GM10248 (cell line): ENCODE measurements at regions of chr5 and their contacts with region 1.

Region 1: GRCh38 chr5:115607935-115608334 is 5.7 kb upstream of the TICAM2 start:
- DNase-seq: no peak
- CTCF ChIP-seq: no peak

Region 2: DNA sequence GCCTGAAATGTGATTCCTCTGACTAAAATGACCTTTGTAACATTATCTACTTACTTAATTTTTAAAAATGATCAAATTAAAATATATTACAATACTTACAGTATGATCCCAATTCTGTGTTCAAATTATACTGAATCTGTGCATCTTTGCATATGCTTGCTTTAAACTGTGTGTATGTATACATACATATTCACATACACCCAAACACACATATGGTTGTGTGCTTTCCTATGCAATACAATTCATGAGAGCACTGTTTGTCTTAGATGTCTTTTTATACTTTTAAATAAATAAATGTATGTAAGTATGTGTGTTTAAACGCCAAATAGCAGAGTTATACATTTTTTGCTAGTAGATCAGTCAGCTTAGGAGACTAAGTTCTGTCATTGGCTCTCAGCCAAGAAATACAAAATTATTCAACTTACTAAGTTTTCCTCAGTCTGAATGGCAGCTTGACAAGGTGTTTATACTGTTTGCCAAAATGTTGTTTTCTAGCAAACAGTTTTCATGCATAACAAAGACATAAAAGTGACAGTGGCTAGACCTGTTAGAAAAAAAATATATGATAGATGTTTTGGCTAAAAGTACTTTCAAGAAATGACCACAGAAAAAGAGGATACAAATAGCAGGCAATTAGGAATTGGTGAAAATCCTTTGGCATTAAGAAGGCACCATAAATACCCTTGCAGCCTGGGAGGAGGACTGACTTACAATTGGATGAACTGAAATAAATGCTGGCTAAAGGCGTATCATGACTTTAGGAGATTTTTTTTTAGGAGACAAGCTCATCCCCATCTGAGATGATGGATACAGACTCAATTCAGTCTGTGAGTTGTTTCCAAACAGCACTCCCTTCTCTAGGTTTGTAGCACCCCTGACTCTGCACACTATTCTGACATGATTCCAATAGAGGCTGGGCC is 13.5 kb before region 1 on chr5:
- CTCF ChIA-PET with region 1: no interaction called
- POLR2A ChIA-PET with region 1: no interaction called
- DNase-seq: no peak
- CTCF ChIP-seq: no peak

Region 3: DNA sequence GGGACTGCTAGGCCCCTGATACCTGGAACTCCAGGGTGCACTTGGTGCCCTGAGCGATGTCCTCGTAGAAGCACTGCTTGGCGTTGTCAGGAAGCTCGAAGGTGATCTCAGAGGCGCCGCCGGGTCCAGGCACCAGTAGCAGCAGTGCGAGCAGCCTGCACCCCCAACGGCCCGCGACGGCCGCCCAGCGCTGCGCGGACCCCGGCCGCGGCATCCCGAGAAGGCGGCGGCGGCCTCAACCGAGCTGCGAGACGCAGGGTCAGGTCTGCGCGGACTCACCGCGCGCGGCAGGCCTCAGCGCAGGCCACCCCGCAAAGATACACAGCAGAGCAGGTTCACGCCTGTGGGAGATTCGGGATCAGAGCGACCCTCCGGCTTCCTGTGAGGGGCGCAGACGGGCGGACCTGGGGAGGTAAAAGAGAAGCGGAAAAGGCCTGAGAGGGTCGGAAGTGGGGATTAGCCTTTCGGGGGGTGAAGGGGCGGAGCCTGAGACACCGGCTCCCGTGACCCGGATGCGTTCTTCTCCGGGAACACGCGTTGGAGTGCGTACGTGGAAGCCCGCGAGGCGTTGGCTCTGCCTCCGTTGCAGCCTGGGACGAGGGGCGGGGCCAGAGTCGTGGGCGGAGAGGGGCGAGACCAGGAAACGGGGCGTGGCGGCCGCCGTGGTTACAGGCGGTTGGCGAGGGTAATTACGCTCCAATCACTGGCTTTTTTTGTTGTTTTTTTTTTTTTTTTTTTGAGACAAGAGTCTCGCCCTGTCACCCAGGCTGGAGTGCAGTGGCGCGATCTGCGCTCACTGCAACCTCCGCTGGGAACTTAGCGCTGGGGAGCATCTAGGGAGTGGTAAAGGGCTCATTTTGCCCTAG is 17.9 kb after region 1 on chr5 and contains the start of gene TMED7:
- CTCF ChIA-PET with region 1: interaction called, 14 read pairs
- POLR2A ChIA-PET with region 1: interaction called, 4 read pairs
- DNase-seq: peak; percentile 97
- CTCF ChIP-seq: no peak